ENCODE measurements at regions of chr1 and their contacts with region 1.

Region 1: GRCh38 chr1:61851849-61852669 is 109.8 kb downstream of the PATJ start:
- DNase-seq: peak; percentile 79
- ATAC-seq: peak; percentile 87
- H3K4me3 ChIP-seq: no peak overlapping the region
- H3K27ac ChIP-seq: no peak overlapping the region
- H3K4me1 ChIP-seq: no peaks in the 10 kb centered on the region
- H3K27me3 ChIP-seq: peaks cover 2% of the 10 kb centered on the region; the same call in 1 of the 2 replicates
- CTCF ChIP-seq: peak; percentile 89
- POLR2A ChIP-seq: no peak
- RAD21 ChIP-seq: peak; percentile 90

Region 2: GRCh38 chr1:59971464-59971911 is 1880.6 kb before region 1 on chr1:
- CTCF ChIA-PET with region 1: no interaction called
- POLR2A ChIA-PET with region 1: no interaction called
- dilution Hi-C with region 1: no loop called
- in situ Hi-C with region 1: no loop called
- intact Hi-C with region 1: loop called (anchors 2 kb)
- DNase-seq: peak; percentile 34
- ATAC-seq: peak; percentile 84
- H3K4me3 ChIP-seq: no peak overlapping the region
- H3K27ac ChIP-seq: no peak overlapping the region
- H3K4me1 ChIP-seq: peaks cover 5% of the 10 kb centered on the region
- H3K27me3 ChIP-seq: peaks cover 15% of the 10 kb centered on the region
- CTCF ChIP-seq: peak; percentile 88
- POLR2A ChIP-seq: no peak
- RAD21 ChIP-seq: peak; percentile 68

Region 3: GRCh38 chr1:60969971-60970509 is 882.0 kb before region 1 on chr1:
- CTCF ChIA-PET with region 1: no interaction called
- POLR2A ChIA-PET with region 1: no interaction called
- dilution Hi-C with region 1: no loop called
- in situ Hi-C with region 1: loop called (anchors 10 kb)
- intact Hi-C with region 1: loop called (anchors 1 kb)
- DNase-seq: peak; percentile 23
- ATAC-seq: peak; percentile 67; the same call in 1 of the 2 replicates
- H3K4me3 ChIP-seq: no peak overlapping the region
- H3K27ac ChIP-seq: no peak overlapping the region
- H3K4me1 ChIP-seq: no peaks in the 10 kb centered on the region
- H3K27me3 ChIP-seq: no peaks in the 10 kb centered on the region; the same call in 1 of the 2 replicates
- CTCF ChIP-seq: peak; percentile 48
- POLR2A ChIP-seq: no peak
- RAD21 ChIP-seq: peak; percentile 49

Region 4: DNA sequence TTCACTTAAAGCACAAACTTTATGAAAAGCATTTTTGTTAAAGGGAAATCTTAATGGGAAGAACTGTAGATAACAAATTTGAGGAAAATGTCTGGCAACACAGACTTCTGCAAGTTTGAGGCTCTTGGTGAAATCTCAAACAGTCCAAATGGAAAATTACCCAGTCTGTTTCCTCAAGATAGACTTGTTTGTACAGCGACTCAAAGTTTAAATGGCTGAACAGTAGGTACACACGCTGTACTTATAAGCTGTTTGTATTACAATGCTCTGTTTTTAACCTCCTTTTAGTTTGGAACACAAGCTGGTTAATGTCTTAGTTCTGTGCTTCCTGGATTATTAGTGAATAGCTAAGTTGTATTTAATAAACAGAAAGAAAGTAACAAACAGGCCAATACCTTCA is 552.6 kb before region 1 on chr1:
- CTCF ChIA-PET with region 1: no interaction called
- POLR2A ChIA-PET with region 1: no interaction called
- dilution Hi-C with region 1: no loop called
- in situ Hi-C with region 1: no loop called
- intact Hi-C with region 1: no loop called
- DNase-seq: no peak
- ATAC-seq: no peak
- H3K4me3 ChIP-seq: no peak overlapping the region
- H3K27ac ChIP-seq: no peak overlapping the region
- H3K4me1 ChIP-seq: no peaks in the 10 kb centered on the region
- H3K27me3 ChIP-seq: no peaks in the 10 kb centered on the region
- CTCF ChIP-seq: no peak
- POLR2A ChIP-seq: no peak
- RAD21 ChIP-seq: no peak

Region 5: DNA sequence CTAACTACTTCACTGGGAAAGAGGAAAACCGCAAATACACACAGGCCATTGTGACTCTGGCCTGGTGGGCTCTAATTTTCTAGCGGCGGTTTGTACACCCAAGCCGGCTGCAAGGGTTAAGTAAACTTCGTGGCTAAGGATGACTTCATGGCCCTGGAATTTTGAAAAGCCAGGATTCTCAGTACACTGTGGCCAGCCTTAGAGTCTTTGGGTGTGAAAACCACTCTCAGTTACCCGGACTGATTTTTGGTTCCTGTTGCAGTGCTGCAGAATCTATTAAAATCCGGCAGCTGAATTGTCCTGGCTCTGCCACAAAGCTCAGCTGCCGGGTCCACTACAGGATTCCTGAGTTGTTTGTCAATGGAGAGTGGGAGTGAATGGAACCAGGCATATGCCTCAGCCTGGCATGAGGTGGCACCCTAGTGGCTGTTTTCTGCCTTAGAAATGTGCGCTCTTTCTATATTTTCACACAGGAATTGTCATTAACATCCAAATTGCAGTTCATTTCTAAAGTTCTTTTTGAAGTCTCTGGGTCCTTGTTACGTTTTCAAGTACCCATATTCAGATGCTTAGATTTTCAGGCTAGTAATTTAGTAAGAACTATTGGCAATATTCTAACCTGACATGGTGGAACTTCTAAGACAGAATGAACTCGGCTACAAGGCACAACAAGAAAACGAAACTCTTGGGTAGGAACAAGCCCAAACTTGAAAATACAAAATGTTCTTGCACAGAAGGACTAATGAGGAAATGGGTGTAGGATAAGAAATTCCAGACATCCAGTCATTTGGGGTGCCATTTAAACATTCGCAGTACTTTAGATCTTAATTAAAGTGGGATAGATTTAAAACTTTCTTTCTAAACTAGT is 513.8 kb before region 1 on chr1:
- CTCF ChIA-PET with region 1: no interaction called
- POLR2A ChIA-PET with region 1: no interaction called
- dilution Hi-C with region 1: no loop called
- in situ Hi-C with region 1: no loop called
- intact Hi-C with region 1: loop called (anchors 1 kb)
- DNase-seq: peak; percentile 75
- ATAC-seq: peak; percentile 94
- H3K4me3 ChIP-seq: no peak overlapping the region
- H3K27ac ChIP-seq: peak overlapping the region; percentile 6; the same call in 1 of the 2 replicates
- H3K4me1 ChIP-seq: no peaks in the 10 kb centered on the region
- H3K27me3 ChIP-seq: peaks cover 29% of the 10 kb centered on the region
- CTCF ChIP-seq: peak; percentile 60
- POLR2A ChIP-seq: no peak
- RAD21 ChIP-seq: peak; percentile 66

Region 6: DNA sequence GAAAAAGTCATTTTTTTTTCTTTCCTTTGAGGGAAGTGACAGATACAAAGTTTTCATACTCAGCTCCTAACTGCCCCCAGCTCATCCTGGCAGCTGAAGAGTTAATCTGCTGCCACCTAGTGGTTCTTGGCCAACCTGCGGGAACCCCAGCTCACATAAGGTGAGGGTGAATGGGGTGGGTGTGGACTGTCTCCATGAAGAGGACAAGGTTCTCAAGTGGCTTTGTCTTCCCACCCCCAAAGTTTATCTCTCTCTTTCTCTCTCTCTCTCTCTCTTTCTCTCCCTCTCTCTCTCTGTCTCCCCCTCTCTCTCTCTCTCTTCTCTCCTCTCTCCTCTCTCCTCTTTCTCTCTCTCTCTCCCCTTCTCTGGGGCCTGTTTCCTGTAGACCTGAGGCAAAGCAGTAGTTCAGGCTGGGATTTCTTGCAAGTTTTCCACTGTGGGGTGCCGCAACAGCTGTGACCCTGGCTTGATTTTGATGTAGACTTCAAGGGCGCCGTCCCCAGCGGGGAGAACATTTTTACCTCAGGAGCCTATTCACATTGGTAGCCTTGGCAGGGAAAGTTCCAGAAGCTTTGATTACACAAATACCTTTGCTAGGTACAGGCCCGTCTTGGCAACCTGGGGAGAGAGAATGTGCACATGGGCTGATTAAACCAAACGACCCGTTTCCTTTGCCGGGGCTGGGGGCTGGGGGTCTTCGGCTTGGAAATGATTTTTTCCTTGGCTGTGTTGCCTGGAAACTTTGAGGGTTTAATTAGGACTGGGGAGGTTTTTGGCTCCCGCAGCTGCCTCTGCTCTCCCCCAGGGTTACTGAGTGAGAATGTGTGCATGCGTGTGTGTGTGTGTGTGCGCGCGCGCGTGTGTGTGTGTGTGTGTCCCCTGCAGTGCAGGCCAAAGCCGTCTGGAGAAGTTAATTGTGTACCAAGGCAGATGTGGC is 263.1 kb before region 1 on chr1:
- CTCF ChIA-PET with region 1: no interaction called
- POLR2A ChIA-PET with region 1: no interaction called
- dilution Hi-C with region 1: no loop called
- in situ Hi-C with region 1: no loop called
- intact Hi-C with region 1: loop called (anchors 2 kb)
- DNase-seq: peak; percentile 36
- ATAC-seq: peak; percentile 85
- H3K4me3 ChIP-seq: no peak overlapping the region
- H3K27ac ChIP-seq: no peak overlapping the region
- H3K4me1 ChIP-seq: no peaks in the 10 kb centered on the region
- H3K27me3 ChIP-seq: no peaks in the 10 kb centered on the region; the same call in 1 of the 2 replicates
- CTCF ChIP-seq: peak; percentile 63
- POLR2A ChIP-seq: no peak
- RAD21 ChIP-seq: peak; percentile 63

Region 7: DNA sequence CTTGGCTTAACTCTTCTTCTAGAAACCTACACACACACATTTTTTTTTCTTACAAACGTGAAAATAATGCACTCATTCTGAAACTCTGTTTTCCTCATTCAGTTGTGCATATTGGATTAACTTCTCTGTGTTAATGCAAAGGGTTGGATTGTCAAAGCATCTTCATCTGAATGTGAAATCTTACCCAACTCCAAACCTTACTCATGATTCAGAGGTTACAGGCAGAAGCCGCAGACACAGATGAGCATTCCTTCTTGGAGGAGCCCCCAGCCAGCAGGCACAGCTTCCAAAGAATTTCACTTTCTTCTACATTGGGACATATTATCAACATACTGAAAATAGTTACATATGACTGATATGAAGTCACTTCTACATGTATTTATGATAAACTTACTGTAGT is 94.1 kb before region 1 on chr1:
- CTCF ChIA-PET with region 1: no interaction called
- POLR2A ChIA-PET with region 1: interaction called, 10 read pairs
- dilution Hi-C with region 1: no loop called
- in situ Hi-C with region 1: no loop called
- intact Hi-C with region 1: no loop called
- DNase-seq: peak; percentile 63
- ATAC-seq: peak; percentile 59
- H3K4me3 ChIP-seq: no peak overlapping the region
- H3K27ac ChIP-seq: no peak overlapping the region
- H3K4me1 ChIP-seq: no peaks in the 10 kb centered on the region
- H3K27me3 ChIP-seq: no peaks in the 10 kb centered on the region
- CTCF ChIP-seq: no peak
- POLR2A ChIP-seq: no peak
- RAD21 ChIP-seq: no peak

Region 8: GRCh38 chr1:62905309-62906271 is 1053.5 kb after region 1 on chr1:
- CTCF ChIA-PET with region 1: no interaction called
- POLR2A ChIA-PET with region 1: no interaction called
- dilution Hi-C with region 1: no loop called
- in situ Hi-C with region 1: no loop called
- intact Hi-C with region 1: no loop called
- DNase-seq: no peak
- ATAC-seq: no peak
- H3K4me3 ChIP-seq: no peak overlapping the region
- H3K27ac ChIP-seq: no peak overlapping the region
- H3K4me1 ChIP-seq: no peaks in the 10 kb centered on the region
- H3K27me3 ChIP-seq: peaks cover 5% of the 10 kb centered on the region
- CTCF ChIP-seq: no peak
- POLR2A ChIP-seq: no peak
- RAD21 ChIP-seq: no peak